ENCODE measurements at regions of chr5 and their contacts with region 1.

Region 1: DNA sequence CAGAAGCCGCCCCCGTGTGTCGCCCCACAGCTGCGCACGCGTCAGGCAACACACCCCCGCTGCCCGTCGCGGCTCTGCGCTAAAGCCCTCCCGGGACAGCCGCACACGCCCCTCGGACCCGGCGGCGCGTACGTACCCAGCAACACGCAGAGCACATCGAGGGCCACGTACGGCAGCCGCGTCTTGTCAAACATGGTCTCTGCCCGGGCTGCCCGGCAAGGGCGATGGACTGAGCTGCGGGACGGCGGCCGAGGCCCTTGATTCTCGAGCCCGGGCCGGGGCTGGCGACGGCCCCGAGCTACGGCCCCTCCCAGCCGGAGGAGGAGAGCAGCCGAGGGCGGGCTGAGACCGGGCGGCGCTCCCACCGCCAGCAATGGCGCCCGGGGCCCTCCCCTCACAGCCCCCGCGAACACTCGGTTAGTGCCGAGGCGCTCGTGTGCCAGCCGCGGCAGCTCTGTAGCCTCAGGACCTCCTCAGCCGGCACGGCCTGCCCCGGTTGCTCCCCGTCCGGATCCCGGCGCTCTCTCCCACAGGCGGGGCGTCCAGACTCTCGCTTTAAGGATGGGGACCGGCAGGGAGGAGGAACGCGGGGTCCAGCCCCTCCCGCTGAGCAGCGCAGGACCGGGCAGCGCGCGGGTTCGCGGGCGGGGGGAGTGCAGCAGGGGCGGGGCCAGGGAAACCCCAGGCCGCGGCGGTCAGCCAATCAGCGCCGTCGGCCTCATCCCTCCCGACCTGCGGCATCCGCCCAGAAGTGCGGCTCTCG is at the start of gene PLPP1:
- DNase-seq: peak; percentile 83
- ATAC-seq: peak; percentile 95
- H3K4me3 ChIP-seq: peak within 1 kb of the TSS; percentile 93
- H3K27ac ChIP-seq: peak within 1 kb of the TSS; percentile 97
- H3K4me1 ChIP-seq: 0 out of 2 replicates have a peak, but pooled peaks cover 3% of the 10 kb centered on the region
- H3K27me3 ChIP-seq: no peaks in the 10 kb centered on the region
- CTCF ChIP-seq: no peak
- POLR2A ChIP-seq: peak; percentile 72
- RAD21 ChIP-seq: no peak; the same call in 1 of the 2 replicates
- total RNA-seq, gene PLPP1: 21.3 and 24.7 TPM in 2 replicates

Region 2: DNA sequence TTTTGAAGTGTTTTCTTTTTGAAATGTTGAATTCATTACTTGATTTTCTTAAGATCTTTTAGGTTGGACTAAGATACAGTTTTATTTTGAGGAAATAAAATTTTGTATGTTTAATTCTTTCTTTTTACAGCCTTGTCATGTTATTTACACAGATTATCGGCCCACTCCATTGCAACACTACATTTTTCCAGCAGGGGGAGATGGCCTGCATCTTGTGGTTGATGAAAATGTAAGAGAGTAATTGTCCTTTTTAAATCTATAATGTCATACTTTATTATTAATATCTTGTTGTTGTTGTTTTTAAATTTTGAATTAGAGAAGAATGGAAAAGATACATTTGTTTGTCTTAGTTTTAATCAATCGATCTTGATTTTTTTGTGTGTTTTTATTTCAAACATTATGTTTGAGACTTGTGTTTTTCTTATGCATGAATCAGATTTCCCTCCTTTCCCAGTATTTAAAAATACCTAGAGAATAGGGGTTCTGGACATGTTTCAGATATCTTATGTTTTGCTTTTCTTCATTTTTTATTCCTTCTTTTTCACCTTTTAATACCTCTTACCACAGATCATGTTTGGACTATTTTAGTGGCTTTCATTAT is 190.1 kb before region 1 on chr5:
- CTCF ChIA-PET with region 1: no interaction called
- POLR2A ChIA-PET with region 1: no interaction called
- dilution Hi-C with region 1: no loop called
- in situ Hi-C with region 1: no loop called
- intact Hi-C with region 1: loop called (anchors 10 kb)
- DNase-seq: peak; percentile 70
- ATAC-seq: peak; percentile 83
- H3K4me3 ChIP-seq: no peak overlapping the region
- H3K27ac ChIP-seq: no peak overlapping the region
- H3K4me1 ChIP-seq: no peaks in the 10 kb centered on the region
- H3K27me3 ChIP-seq: no peaks in the 10 kb centered on the region
- CTCF ChIP-seq: peak; percentile 86
- POLR2A ChIP-seq: no peak
- RAD21 ChIP-seq: peak; percentile 66

Region 3: DNA sequence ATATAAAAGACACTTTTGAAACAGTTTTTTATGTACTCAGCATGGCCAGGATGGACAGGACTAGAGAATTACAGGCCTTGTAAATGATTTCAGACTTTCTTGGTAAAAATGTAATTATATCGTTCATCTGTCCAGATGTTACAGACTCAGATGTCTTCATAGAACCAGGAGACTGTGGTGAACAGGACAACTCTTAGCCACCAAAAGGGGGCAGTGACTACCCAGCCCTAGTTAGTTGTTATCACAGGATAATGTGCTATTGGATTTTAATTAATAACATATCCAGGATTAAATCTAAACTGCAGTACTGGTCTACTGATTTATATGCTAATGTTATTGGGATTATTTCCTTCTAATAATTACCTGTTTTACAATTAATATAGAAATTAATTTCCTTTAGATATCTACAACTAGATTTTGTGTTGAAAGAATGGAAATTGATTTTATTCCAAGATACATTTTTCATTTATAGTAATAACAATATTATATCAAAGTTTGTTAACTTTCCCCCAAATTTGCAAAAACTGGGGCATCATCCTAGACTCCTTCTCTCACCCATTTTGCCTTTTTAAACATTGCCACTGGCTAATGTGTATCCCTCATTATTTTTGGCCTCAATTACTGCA is 127.4 kb before region 1 on chr5:
- CTCF ChIA-PET with region 1: no interaction called
- POLR2A ChIA-PET with region 1: no interaction called
- dilution Hi-C with region 1: no loop called
- in situ Hi-C with region 1: no loop called
- intact Hi-C with region 1: loop called (anchors 2 kb)
- DNase-seq: peak; percentile 64
- ATAC-seq: peak; percentile 87
- H3K4me3 ChIP-seq: no peak overlapping the region
- H3K27ac ChIP-seq: no peak overlapping the region
- H3K4me1 ChIP-seq: 0 out of 2 replicates have a peak, but pooled peaks cover 2% of the 10 kb centered on the region
- H3K27me3 ChIP-seq: no peaks in the 10 kb centered on the region
- CTCF ChIP-seq: peak; percentile 79
- POLR2A ChIP-seq: no peak
- RAD21 ChIP-seq: peak; percentile 85

Region 4: DNA sequence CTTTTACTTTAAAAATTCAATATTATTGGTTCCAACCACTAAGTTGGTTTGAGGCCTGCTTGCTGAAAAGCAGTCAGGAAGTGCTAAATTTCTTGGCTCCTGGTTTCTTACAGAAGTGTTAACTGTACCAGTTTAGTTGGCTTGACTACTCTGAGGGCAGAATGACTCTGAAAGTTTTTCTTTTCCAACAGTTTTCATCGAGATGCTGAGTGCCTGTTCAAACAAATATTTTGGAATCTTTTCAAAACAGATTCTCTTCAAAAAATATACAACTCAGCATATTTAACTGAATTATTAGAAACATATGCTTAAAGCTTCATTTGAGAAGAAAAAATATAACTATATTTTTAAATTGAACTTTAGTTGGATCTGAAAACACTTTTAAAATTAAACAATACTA is 140.5 kb after region 1 on chr5:
- CTCF ChIA-PET with region 1: no interaction called
- POLR2A ChIA-PET with region 1: no interaction called
- dilution Hi-C with region 1: no loop called
- in situ Hi-C with region 1: no loop called
- intact Hi-C with region 1: loop called (anchors 5 kb)
- DNase-seq: peak; percentile 3
- ATAC-seq: peak; percentile 48
- H3K4me3 ChIP-seq: no peak overlapping the region
- H3K27ac ChIP-seq: no peak overlapping the region
- H3K4me1 ChIP-seq: peaks cover 2% of the 10 kb centered on the region
- H3K27me3 ChIP-seq: no peaks in the 10 kb centered on the region
- CTCF ChIP-seq: no peak
- POLR2A ChIP-seq: no peak
- RAD21 ChIP-seq: no peak

Measured in IMR-90 (cell line).